MCF 10A (cell line): ENCODE measurements at regions of chr2 and their contacts with region 1.

Region 1: DNA sequence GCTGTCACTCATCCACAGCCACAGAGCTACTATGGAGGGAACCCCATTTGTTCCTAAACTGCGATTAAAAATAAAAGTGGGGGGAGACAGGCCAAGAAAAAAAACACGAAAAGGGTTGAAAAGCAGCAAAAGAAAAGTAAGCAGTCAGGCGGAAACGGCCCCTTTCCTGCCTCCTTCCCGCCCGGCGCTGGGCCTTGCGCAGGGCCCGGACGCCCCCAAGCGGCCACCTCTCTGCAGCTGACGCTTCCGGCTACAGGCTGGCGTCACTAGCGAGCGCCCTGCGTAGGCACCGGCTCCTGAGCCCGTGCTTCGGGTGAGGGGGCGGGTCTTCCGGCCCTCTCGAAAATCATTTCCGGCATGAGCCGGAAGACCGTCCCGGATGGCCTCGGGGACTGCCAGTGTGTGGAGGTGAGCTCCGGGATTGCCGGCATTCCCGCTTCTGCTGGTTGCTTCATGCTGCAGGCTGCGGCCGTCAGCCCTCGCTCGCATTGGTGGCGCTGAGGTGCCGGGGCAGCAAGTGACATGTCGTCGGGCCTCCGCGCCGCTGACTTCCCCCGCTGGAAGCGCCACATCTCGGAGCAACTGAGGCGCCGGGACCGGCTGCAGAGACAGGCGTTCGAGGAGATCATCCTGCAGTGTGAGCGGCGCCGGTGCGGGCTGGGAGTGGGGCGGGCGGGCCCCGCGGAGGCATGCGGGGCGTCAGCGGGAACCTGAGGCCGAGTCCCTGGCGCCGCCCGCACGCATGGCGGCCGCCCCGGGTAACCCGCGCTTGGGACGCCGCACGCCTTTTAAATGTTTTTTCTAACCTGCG is at the start of gene ATG16L1:
- DNase-seq: peak; percentile 96
- H3K4me3 Mint-ChIP-seq: peak within 1 kb of the TSS; percentile 86
- H3K27ac Mint-ChIP-seq: peak within 1 kb of the TSS; percentile 74
- H3K4me1 Mint-ChIP-seq: peaks cover 28% of the 10 kb centered on the region
- H3K27me3 Mint-ChIP-seq: no peaks in the 10 kb centered on the region
- CTCF ChIP-seq: peak; percentile 92
- total RNA-seq, gene ATG16L1: 26.4 and 28.7 TPM in 2 replicates

Region 2: GRCh38 chr2:232761301-232761907 is 490.1 kb before region 1 on chr2:
- CTCF ChIA-PET with region 1: interaction called, 3 read pairs
- POLR2A ChIA-PET with region 1: no interaction called
- intact Hi-C with region 1: loop called (anchors 1 kb)
- DNase-seq: peak; percentile 54
- H3K4me3 Mint-ChIP-seq: no peak overlapping the region
- H3K27ac Mint-ChIP-seq: no peak overlapping the region
- H3K4me1 Mint-ChIP-seq: no peaks in the 10 kb centered on the region
- H3K27me3 Mint-ChIP-seq: no peaks in the 10 kb centered on the region
- CTCF ChIP-seq: peak; percentile 38

Region 3: GRCh38 chr2:232979871-232980461 is 271.5 kb before region 1 on chr2:
- CTCF ChIA-PET with region 1: interaction called, 3 read pairs
- POLR2A ChIA-PET with region 1: no interaction called
- intact Hi-C with region 1: loop called (anchors 1 kb)
- DNase-seq: peak; percentile 87
- H3K4me3 Mint-ChIP-seq: peak overlapping the region; percentile 28
- H3K27ac Mint-ChIP-seq: peak overlapping the region; percentile 44
- H3K4me1 Mint-ChIP-seq: peaks cover 12% of the 10 kb centered on the region
- H3K27me3 Mint-ChIP-seq: no peaks in the 10 kb centered on the region
- CTCF ChIP-seq: peak; percentile 24

Region 4: GRCh38 chr2:233129351-233129987 is 122.0 kb before region 1 on chr2:
- CTCF ChIA-PET with region 1: interaction called, 14 read pairs
- POLR2A ChIA-PET with region 1: no interaction called
- intact Hi-C with region 1: no loop called
- DNase-seq: no peak
- H3K4me3 Mint-ChIP-seq: no peak overlapping the region
- H3K27ac Mint-ChIP-seq: no peak overlapping the region
- H3K4me1 Mint-ChIP-seq: no peaks in the 10 kb centered on the region
- H3K27me3 Mint-ChIP-seq: no peaks in the 10 kb centered on the region
- CTCF ChIP-seq: no peak